ENCODE measurements at regions of chr3 and their contacts with region 1.

Region 1: DNA sequence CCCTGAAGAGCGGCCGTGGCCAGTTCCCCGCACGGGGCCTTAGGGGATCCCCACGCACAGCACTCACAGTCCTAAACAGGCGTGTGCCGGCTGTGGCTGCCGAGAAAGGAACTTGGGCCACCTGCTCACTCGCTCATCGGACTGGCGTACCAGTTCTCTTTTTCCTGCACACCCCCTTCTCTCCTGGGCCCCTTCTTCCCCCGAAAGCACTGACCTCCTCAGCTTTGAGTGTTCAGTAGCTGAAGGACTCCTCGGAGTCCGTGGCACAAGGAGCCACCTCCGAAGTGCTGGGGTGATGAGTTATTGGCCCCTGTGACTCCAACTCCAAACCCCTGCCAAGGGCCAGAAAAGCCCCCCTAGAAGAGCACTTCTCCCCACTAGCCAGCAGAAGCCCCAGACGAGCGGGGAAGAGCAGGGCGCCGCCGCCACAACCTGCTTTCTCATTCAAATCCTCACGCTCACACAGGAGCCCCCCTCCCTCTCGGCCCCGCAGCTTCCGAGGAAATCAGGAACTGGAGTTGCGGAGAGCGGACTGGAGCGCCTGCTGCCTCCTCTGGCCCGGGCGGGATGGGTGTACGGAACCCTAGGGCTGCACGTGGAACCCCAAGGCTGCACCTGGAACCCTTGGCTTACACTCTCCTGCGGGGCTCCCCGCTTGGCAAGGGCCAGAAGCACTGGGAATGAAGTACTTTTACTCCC is at the start of gene PLCH1:
- DNase-seq: no peak
- H3K4me3 Mint-ChIP-seq: peak within 1 kb of the TSS; percentile 84
- H3K27ac Mint-ChIP-seq: peak within 1 kb of the TSS; percentile 25
- H3K4me1 Mint-ChIP-seq: peaks cover 11% of the 10 kb centered on the region
- H3K27me3 Mint-ChIP-seq: peaks cover 73% of the 10 kb centered on the region
- total RNA-seq, gene PLCH1: 0.10 and 0.16 TPM in 2 replicates

Region 2: DNA sequence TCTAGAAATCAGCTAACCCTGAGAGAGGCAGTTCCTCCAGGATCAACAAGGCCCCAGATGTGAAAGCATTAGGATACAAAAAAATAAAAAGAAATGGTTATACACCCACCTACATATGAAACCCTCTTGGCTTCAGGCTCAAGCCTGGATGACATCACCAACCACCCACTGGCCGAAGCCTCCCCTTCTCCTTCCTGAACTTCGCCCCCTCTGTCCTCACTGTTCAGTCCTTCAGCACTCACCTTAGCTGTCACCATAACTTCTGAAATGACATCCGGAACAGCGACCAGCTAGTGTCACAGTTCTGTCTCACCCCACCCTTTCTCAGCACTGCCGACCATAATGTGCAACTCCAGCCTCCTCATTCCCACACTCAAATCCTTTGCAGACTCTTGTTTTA is 98.6 kb before region 1 on chr3:
- intact Hi-C with region 1: no loop called
- DNase-seq: no peak
- H3K4me3 Mint-ChIP-seq: no peak overlapping the region
- H3K27ac Mint-ChIP-seq: no peak overlapping the region
- H3K4me1 Mint-ChIP-seq: no peaks in the 10 kb centered on the region
- H3K27me3 Mint-ChIP-seq: no peaks in the 10 kb centered on the region

Region 3: DNA sequence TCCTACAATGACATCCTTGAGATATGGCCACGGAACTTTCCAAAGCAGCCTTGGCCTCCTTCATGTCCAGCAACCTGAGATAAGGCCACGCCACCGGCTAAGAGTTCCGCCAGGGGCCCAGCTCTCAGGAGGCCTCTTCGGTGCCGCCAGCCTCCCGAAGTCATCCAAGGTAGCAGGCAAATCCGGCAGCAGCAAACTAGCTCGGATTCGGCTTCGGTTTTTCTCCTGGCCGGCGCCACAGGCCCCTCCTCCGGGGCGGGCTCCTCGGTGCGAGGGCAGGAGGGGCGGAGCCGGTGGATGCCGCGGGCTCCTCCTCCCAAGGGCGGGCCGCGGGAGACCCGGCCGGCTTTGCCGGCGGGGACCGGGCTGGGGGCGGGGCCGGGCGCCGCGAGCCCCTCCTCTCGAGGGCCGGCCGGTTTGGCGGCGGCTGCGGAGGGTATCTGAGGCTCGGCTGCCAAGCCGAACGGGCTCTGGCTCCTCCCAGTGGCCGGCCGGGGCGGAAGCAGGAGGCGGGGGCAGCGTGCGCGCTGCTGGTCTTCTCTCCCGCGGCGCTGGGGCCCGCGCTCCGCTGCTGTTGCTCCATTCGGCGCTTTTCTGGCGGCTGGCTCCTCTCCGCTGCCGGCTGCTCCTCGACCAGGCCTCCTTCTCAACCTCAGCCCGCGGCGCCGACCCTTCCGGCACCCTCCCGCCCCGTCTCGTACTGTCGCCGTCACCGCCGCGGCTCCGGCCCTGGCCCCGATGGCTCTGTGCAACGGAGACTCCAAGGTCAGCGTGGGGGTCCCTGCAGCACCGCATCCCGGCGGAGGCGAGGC is 125.6 kb after region 1 on chr3 and contains the start of gene GMPS:
- intact Hi-C with region 1: loop called (anchors 5 kb)
- DNase-seq: peak; percentile 98
- H3K4me3 Mint-ChIP-seq: peak within 1 kb of the TSS; percentile 98
- H3K27ac Mint-ChIP-seq: peak within 1 kb of the TSS; percentile 96
- H3K4me1 Mint-ChIP-seq: peaks cover 23% of the 10 kb centered on the region
- H3K27me3 Mint-ChIP-seq: no peaks in the 10 kb centered on the region
- total RNA-seq, gene GMPS: 131 and 144 TPM in 2 replicates

Region 4: DNA sequence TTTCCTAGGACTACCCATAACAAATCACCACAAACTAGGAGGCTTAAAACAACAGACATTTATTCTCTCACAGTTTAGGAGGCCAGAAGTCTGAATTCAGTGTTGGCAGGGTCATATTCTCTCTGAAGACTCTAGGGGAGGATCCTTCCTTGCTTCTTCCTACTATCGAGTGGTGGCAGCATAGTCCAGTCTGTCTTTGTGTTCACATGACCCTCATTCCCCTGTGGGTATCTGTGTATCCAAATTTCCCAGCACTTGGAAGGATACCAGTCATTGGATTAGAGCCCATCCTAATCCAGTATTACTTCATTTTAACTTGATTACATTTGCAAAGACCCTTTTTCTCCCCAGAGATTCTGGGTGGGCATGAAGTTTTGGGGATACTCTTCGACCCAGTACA is 189.5 kb after region 1 on chr3:
- intact Hi-C with region 1: no loop called
- DNase-seq: no peak
- H3K4me3 Mint-ChIP-seq: no peak overlapping the region
- H3K27ac Mint-ChIP-seq: no peak overlapping the region
- H3K4me1 Mint-ChIP-seq: no peaks in the 10 kb centered on the region
- H3K27me3 Mint-ChIP-seq: no peaks in the 10 kb centered on the region

Measured in activated T-helper 1 cell treated with anti-CD3 and anti-CD28 coated beads, Interleukin-12 subunit alpha, Interleukin-12 subunit beta, Interleukin-2, Interleukin-4 antibody, amounts not matched to agents 30 ng/mL and 10 ng/mL and 1 ng/mL, durations not matched to agents 14 hours and 24 hours and 36 hours (primary cell).